ENCODE measurements at regions of chr6 and their contacts with region 1.

Region 1: GRCh38 chr6:11653028-11653583 is 115.6 kb downstream of the TMEM170B start:
- DNase-seq: peak in 2 of 5 donors; percentile 19 to 60
- ATAC-seq: peak in 3 of 4 donors; percentile 53 to 72 (median 71)
- H3K4me3 ChIP-seq: no peak overlapping the region
- H3K27ac ChIP-seq: peak overlapping the region in 1 of 12 donors; percentile 54
- H3K4me1 ChIP-seq: peaks cover 2 to 51% (median 25%) of the 10 kb centered on the region in 12 donors
- H3K27me3 ChIP-seq: peaks cover 0 to 6% (median 0%) of the 10 kb centered on the region in 9 donors
- CTCF ChIP-seq: no peak
- POLR2A ChIP-seq: no peak

Region 2: DNA sequence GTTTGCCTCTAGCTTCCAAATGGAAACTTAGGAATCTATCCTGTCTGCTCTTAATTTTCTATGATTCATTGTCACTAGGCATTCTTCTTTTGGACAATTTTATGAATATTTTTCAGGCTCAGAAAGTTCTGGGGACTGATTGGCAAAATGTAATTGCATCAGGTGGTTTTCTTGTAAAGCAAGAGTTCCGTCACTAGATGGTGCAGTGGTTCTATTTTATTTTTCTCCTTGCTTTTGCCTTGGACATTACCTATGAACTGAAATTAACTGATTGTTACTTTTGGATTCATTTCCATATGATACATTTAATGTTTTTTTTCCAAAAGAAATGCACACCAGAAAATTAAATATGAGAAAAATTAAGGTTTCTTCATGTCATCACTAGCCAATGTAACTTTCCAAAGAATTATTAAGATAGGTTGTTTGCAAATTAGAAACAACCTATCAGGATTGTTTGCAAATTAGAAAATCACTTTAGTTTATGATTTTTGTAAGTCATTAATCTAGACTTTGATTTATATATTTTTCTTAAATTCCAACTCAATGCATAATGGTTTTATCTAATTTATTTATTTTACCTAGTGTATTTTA is 67.6 kb before region 1 on chr6:
- intact Hi-C with region 1: loop called in 6 of 10 experiments (anchors 2 to 5 kb)
- DNase-seq: no peak
- ATAC-seq: peak in 1 of 4 donors; percentile 41
- H3K4me3 ChIP-seq: no peak overlapping the region
- H3K27ac ChIP-seq: no peak overlapping the region
- H3K4me1 ChIP-seq: peaks cover 0 to 5% (median 0%) of the 10 kb centered on the region in 12 donors
- H3K27me3 ChIP-seq: no peaks in the 10 kb centered on the region
- CTCF ChIP-seq: peak; percentile 47 to 75 (median 70)
- POLR2A ChIP-seq: no peak

Region 3: GRCh38 chr6:11609315-11610071 is 43.6 kb before region 1 on chr6:
- intact Hi-C with region 1: loop called in 4 of 10 experiments (anchors 5 kb)
- DNase-seq: peak; percentile 40 to 75 (median 59)
- ATAC-seq: peak; percentile 26 to 81 (median 76)
- H3K4me3 ChIP-seq: no peak overlapping the region
- H3K27ac ChIP-seq: peak overlapping the region in 10 of 12 donors; percentile 8 to 74 (median 48)
- H3K4me1 ChIP-seq: peaks cover 0 to 51% (median 37%) of the 10 kb centered on the region in 12 donors
- H3K27me3 ChIP-seq: no peaks in the 10 kb centered on the region
- CTCF ChIP-seq: no peak
- POLR2A ChIP-seq: no peak

Region 4: GRCh38 chr6:12011276-12012076 is 358.4 kb after region 1 on chr6:
- intact Hi-C with region 1: loop called in 1 of 10 experiments (anchors 10 kb)
- DNase-seq: peak; percentile 98 to 99 (median 99)
- ATAC-seq: peak; percentile 92 to 95 (median 95)
- H3K4me3 ChIP-seq: peak overlapping the region; percentile 61 to 98 (median 78)
- H3K27ac ChIP-seq: peak overlapping the region; percentile 91 to 100 (median 96)
- H3K4me1 ChIP-seq: peaks cover 0 to 39% (median 19%) of the 10 kb centered on the region in 12 donors
- H3K27me3 ChIP-seq: no peaks in the 10 kb centered on the region
- CTCF ChIP-seq: no peak
- POLR2A ChIP-seq: no peak

Region 5: DNA sequence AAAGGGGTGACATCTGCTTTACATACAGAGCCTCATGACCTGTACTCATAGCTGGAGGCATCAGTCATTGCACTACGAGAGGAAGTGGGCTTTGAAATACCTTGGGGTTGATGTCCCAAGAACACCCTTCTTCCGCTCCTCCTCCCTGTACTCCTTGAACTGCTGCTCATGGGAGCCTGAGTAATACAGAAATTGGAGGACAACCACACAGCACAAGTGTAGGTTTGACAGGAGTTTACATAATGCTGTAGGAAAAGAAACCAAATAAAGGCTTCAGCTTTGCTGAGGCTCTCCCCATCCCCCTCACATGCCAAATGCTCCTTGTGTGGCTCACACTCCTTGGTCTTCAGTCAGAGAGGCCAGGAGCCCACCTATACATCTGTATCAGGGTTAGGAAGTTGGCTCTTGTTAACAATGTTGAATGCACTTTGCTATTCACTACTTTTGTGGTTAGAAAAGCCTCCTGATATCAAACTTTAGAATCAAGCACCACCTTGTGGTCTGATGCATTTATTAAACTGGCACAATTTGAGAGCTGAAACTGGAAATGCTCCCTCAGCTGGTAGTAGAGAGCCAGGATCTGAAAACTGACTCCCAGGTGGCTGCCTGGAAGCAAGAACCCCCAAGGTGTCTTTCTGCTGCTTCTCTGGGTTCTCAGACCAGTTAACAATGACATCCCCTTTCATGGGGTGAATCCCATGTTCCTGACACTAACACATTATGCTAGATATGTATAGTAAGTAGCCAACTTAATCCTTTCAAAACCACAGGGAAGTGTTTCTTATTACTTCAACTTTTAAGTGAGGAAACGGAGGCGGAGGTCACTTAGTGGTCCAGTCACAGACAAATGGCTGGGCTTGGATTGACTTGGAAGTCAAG is 580.8 kb after region 1 on chr6:
- intact Hi-C with region 1: loop called (anchors 2 to 5 kb)
- DNase-seq: peak in 1 of 5 donors; percentile 31
- ATAC-seq: peak in 3 of 4 donors; percentile 52 to 66 (median 60)
- H3K4me3 ChIP-seq: no peak overlapping the region
- H3K27ac ChIP-seq: peak overlapping the region in 1 of 12 donors; percentile 11
- H3K4me1 ChIP-seq: peaks cover 0 to 42% (median 0%) of the 10 kb centered on the region in 12 donors
- H3K27me3 ChIP-seq: no peaks in the 10 kb centered on the region
- CTCF ChIP-seq: peak; percentile 58 to 80 (median 68)
- POLR2A ChIP-seq: no peak

Region 6: GRCh38 chr6:12605888-12606345 is 952.8 kb after region 1 on chr6:
- intact Hi-C with region 1: loop called (anchors 2 to 10 kb)
- DNase-seq: peak in 4 of 5 donors; percentile 30 to 40 (median 35)
- ATAC-seq: peak; percentile 63 to 83 (median 77)
- H3K4me3 ChIP-seq: no peak overlapping the region
- H3K27ac ChIP-seq: no peak overlapping the region
- H3K4me1 ChIP-seq: peaks cover 0 to 25% (median 3%) of the 10 kb centered on the region in 12 donors
- H3K27me3 ChIP-seq: no peaks in the 10 kb centered on the region
- CTCF ChIP-seq: peak; percentile 43 to 77 (median 65)
- POLR2A ChIP-seq: no peak

Measured in heart left ventricle (tissue), 16 donors.